Dorsolateral prefrontal cortex (tissue), 120 donors: ENCODE measurements at regions of chr9 and their contacts with region 1.

Region 1: DNA sequence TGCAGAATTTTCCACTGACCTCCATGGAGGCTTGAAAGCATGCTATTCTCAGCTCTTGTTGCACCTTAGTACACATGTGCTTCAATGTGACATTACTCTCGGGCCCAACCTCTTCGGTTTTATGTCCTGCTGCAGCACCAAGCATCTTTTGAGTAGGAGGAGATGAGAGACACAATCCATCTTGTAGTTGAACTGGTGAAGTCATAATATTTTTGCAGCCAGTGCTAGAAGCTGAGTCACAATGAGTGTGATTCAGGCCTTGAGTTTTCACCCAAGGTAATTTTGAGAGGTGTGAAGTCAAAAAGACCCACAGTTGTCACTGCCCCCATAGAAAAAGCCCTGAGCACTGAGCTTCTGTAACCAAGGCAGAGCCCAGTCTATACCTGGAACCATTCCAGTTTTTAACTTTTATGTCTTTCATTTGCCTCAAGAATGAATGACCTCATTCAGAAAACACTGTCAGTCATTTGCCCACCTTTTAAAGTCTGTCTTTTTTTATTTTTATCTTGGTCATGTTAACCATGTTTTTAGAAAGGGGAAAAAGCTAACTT is 117.7 kb downstream of the ZNF462 start:
- DNase-seq: peak in 1 of 10 donors; percentile 33
- H3K4me3 ChIP-seq: no peak overlapping the region
- H3K27ac ChIP-seq: peak overlapping the region in 2 of 59 donors; percentile 11 to 18
- H3K27me3 ChIP-seq: no peaks in the 10 kb centered on the region
- CTCF ChIP-seq: no peak

Region 2: DNA sequence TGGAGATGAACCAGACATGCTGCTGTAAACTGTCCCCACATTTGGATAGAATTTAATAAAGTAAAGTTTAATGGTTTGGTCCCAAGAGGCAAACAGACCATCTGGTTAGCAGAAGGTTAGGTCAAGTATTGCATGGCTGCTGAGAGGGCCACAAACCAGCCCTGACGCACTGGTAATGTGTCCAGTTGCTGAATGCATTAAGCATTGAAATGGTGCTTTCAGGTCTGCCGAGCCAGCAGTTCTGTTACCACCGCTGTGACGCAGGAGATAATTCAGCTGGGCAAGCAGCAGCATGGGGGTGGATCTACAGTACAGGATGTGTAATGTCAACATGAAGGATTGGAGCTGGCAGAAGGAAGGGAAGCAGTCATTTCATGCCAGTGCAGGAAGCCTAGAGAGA is 101.7 kb before region 1 on chr9:
- intact Hi-C with region 1: loop called in 1 of 2 experiments (anchors 1 kb)
- DNase-seq: peak in 9 of 10 donors; percentile 28 to 84 (median 66)
- H3K4me3 ChIP-seq: peak overlapping the region in 10 of 59 donors; percentile 4 to 47 (median 24)
- H3K27ac ChIP-seq: peak overlapping the region; percentile 31 to 95 (median 86)
- H3K27me3 ChIP-seq: no peaks in the 10 kb centered on the region
- CTCF ChIP-seq: no peak